ENCODE measurements at regions of chr12 and their contacts with region 1.

Region 1: DNA sequence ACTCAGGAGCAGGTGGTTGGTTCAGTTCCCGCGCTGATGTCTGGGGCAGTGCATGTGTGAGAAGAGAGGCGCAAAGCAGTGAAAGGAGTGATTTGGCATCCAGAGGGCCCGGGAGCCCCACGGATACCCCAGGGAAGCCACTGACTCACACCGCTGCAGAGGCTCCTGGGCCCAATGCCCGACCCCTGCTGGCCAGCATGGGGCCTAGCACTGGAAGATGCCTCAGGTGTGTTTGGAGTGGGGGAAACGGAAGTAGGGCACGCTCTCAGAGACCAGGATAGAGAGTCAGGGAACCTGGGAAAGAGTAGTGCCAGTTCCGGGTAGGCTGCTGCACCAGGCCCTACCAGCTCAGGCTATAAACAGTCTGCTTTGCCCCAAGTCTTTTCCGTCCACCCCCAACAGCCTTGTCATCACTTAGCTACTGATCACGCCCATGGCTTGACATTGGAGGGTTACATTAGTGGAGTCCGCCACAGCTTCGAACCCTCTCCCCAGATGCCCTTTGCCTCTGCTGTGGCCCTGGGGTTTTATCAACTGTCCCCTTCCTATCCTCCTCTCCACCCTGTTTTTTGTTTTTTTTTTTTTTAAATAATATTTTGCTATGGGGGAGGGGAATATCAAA is 9.5 kb upstream of the CSAD start:
- DNase-seq: peak; percentile 56 to 66
- H3K4me3 ChIP-seq: no peak overlapping the region
- H3K4me3 Mint-ChIP-seq: no peak overlapping the region
- H3K27ac Mint-ChIP-seq: no peak overlapping the region
- H3K4me1 ChIP-seq: no peaks in the 10 kb centered on the region
- H3K4me1 Mint-ChIP-seq: no peaks in the 10 kb centered on the region
- H3K27me3 ChIP-seq: no peaks in the 10 kb centered on the region
- H3K27me3 Mint-ChIP-seq: no peaks in the 10 kb centered on the region
- CTCF ChIP-seq: peak; percentile 69 to 89

Region 2: GRCh38 chr12:53159195-53159839 is 30.9 kb before region 1 on chr12:
- CTCF ChIA-PET with region 1: interaction called, 4 read pairs
- POLR2A ChIA-PET with region 1: no interaction called
- intact Hi-C with region 1: loop called (anchors 1 kb)
- DNase-seq: peak; percentile 75 to 82
- H3K4me3 ChIP-seq: no peak overlapping the region
- H3K4me3 Mint-ChIP-seq: no peak overlapping the region
- H3K27ac Mint-ChIP-seq: peak overlapping the region; percentile 71
- H3K4me1 ChIP-seq: no peaks in the 10 kb centered on the region
- H3K4me1 Mint-ChIP-seq: peaks cover 11% of the 10 kb centered on the region
- H3K27me3 ChIP-seq: no peaks in the 10 kb centered on the region
- H3K27me3 Mint-ChIP-seq: no peaks in the 10 kb centered on the region
- CTCF ChIP-seq: peak; percentile 90

Region 3: DNA sequence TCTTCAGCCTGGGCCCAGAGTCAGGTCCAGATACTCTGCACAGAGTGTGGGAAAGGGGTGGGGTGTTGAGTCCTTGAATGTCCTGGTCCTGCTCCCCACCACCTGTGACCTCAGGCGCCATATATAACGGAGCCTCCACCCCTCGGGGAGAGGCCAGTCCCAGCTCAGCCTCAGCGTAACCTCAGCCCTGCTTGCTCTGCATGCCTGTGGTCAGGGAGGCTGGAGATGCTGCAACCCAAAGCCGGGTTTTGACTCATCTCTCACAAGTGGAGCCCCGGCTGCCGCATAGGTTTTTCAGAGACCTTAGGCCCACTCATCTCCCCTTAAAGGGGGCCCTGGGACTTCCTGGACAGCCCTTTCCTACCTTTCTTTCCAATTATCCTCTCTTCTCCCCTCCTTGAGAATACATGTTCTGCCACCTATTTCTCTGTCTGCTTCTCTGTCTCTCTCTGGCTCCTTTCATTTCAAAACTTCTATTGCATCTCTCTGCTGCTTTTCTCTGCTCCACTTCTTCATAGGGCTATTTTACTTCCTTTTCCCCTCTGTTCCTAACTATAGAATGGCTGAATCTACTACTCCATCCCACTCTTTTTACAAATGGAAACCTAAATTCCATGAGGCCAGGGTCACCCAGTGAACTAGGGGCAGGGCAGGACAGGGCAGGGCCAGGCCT is 15.7 kb after region 1 on chr12:
- CTCF ChIA-PET with region 1: no interaction called
- POLR2A ChIA-PET with region 1: no interaction called
- intact Hi-C with region 1: no loop called
- DNase-seq: no peak
- H3K4me3 ChIP-seq: no peak overlapping the region
- H3K4me3 Mint-ChIP-seq: no peak overlapping the region
- H3K27ac Mint-ChIP-seq: no peak overlapping the region
- H3K4me1 ChIP-seq: no peaks in the 10 kb centered on the region
- H3K4me1 Mint-ChIP-seq: no peaks in the 10 kb centered on the region
- H3K27me3 ChIP-seq: no peaks in the 10 kb centered on the region
- H3K27me3 Mint-ChIP-seq: no peaks in the 10 kb centered on the region
- CTCF ChIP-seq: no peak

Region 4: GRCh38 chr12:53538196-53538689 is 348.0 kb after region 1 on chr12:
- CTCF ChIA-PET with region 1: no interaction called
- POLR2A ChIA-PET with region 1: no interaction called
- intact Hi-C with region 1: no loop called
- DNase-seq: peak; percentile 39 to 64
- H3K4me3 ChIP-seq: no peak overlapping the region
- H3K4me3 Mint-ChIP-seq: peak overlapping the region; percentile 18
- H3K27ac Mint-ChIP-seq: peak overlapping the region; percentile 69
- H3K4me1 ChIP-seq: peaks cover 19% of the 10 kb centered on the region
- H3K4me1 Mint-ChIP-seq: no peaks in the 10 kb centered on the region
- H3K27me3 ChIP-seq: no peaks in the 10 kb centered on the region
- H3K27me3 Mint-ChIP-seq: no peaks in the 10 kb centered on the region
- CTCF ChIP-seq: no peak

Measured in Caco-2 (cell line).